Activated CD4-positive, alpha-beta memory T cell treated with anti-CD3 and anti-CD28 coated beads for 36 hours (primary cell): ENCODE measurements at regions of chr7 and their contacts with region 1.

Region 1: DNA sequence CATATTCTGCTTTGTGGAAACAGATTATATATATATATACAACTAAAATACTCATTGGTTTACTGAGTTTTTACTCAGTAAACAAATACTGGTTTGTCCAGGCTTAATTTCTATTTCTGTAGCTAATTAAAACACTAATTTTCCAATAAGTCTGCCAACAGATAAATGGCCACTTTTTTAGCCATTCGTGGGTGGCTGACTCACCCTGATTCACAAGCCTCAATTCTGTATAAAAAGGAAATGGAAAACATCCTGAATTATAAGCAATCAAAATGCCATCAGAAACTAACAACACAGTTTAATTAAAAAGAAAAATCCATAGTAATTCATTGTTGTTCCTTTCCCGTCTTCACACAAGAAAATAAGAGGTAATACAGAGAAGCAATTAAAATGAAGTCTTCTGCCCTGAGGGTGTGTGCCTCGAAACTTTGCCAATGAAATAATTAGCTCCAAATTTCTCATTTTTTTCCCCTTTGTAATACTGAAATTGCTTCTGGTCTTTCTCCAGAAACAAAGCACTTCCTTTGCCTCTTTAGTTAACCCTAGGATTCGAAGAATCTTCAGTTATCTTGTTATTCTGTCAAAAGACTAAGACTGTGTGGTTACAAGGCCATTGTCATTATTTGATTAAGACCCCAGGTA is 118.7 kb upstream of the PTN start:
- DNase-seq: no peak
- H3K4me3 Mint-ChIP-seq: no peak overlapping the region
- H3K27ac Mint-ChIP-seq: no peak overlapping the region
- H3K4me1 Mint-ChIP-seq: no peaks in the 10 kb centered on the region
- H3K27me3 Mint-ChIP-seq: peaks cover 2% of the 10 kb centered on the region

Region 2: DNA sequence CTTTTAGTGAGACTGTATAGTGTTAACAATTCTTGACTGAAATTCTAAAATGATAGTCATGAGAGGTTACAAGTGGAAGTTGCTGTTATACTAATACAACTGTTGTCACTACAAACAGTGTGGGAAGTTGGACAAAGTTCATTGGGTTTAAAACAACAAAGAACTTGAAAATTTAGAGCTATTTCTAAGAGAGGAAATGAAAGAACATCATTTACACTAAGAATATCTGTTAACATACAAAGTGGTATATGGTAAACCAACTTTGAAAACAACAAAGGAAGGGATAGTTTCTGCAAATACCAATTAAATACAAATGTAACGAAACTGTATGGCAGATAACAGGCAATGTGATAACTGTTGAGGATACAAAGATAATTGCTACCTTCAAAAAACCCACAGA is 1496.6 kb before region 1 on chr7:
- CTCF ChIA-PET with region 1: no interaction called
- POLR2A ChIA-PET with region 1: no interaction called
- intact Hi-C with region 1: loop called (anchors 10 kb)
- DNase-seq: no peak
- H3K4me3 Mint-ChIP-seq: no peak overlapping the region
- H3K27ac Mint-ChIP-seq: no peak overlapping the region
- H3K4me1 Mint-ChIP-seq: peaks cover 67% of the 10 kb centered on the region
- H3K27me3 Mint-ChIP-seq: no peaks in the 10 kb centered on the region